ENCODE measurements at regions of chr3 and their contacts with region 1.

Region 1: DNA sequence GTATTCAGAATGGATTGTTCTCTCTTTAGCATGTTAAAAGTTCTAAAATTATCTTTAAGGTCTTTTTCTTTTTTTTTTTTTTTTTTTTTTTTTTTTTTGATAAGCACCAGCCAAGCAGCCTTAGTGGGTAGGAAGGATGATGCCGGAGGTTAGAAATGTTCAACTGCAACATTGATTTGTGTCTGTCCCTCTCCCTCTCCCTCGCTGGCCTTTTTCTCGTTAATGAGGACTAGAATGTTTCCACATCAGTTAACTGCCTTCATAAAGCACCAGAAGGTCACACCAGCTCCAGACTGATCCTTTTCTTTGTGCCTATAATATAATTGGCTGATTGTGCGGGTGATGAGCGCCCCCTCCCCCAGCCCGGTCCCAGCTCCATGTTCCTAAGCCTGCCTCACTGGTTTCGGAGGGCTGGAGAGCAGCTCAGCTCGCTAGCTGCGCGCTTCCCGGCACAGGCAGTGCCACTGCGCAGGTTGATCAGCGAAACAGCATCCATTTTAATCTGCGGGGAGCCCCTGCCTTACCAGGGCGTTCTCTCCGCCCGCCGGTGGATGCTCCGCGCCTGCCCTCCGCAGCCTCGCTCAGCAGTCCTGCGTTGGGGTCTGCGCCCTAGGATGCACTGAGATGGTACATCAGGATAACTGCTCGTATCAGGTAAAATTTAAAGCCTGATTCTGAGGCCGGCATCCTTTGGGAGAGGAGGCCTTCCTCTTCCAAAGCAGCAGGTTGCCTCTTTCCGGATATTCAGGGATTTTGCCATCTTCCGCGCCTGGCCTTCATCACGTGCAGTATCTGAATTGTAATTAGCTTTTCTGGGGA is 148.9 kb upstream of the IL12A start:
- DNase-seq: peak; percentile 84 to 96 (median 91)

Region 2: GRCh38 chr3:159884661-159885402 is 45.1 kb after region 1 on chr3:
- intact Hi-C with region 1: loop called (anchors 5 kb)
- DNase-seq: peak in 1 of 42 donors; percentile 44